ENCODE measurements at regions of chr16 and their contacts with region 1.

Region 1: GRCh38 chr16:61263400-61263799 is 772.8 kb downstream of the CDH8 start:
- DNase-seq: no peak
- H3K4me3 ChIP-seq: no peak overlapping the region
- H3K4me1 ChIP-seq: no peaks in the 10 kb centered on the region
- H3K27me3 ChIP-seq: no peaks in the 10 kb centered on the region

Region 2: DNA sequence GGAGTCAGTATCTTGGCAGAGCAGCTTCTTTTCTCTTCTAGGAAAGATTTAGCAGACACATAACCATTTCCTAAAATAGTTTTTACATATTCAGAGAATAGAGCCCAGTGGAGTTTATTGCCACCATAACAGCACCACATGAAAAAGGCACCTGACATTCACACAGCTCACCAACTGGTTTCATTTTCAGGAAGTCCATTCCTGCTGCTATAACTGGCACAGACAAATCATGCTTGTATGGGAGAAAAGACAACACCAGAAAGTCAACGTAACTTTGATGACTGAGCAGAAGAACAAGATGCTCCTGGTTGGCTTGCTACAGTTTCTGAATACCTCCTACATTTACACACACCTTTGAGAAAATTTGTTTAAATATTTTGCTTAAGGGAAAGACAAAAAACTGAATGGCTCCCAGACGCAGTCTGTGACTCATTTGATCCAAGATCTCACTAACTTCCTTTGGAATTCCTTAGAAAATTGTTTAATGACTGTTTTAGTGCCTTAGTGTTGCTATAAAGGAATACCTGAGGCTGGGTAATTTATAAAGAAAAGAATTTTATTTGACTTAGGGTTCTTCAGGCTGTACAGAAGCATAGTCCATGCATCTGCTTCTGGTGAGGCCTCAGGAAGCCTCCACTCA is 607.8 kb before region 1 on chr16:
- in situ Hi-C with region 1: no loop called
- DNase-seq: no peak
- H3K4me3 ChIP-seq: no peak overlapping the region
- H3K4me1 ChIP-seq: no peaks in the 10 kb centered on the region
- H3K27me3 ChIP-seq: no peaks in the 10 kb centered on the region

Region 3: GRCh38 chr16:61098505-61098904 is 164.9 kb before region 1 on chr16:
- in situ Hi-C with region 1: no loop called
- DNase-seq: no peak
- H3K4me3 ChIP-seq: no peak overlapping the region
- H3K4me1 ChIP-seq: no peaks in the 10 kb centered on the region
- H3K27me3 ChIP-seq: no peaks in the 10 kb centered on the region

Region 4: DNA sequence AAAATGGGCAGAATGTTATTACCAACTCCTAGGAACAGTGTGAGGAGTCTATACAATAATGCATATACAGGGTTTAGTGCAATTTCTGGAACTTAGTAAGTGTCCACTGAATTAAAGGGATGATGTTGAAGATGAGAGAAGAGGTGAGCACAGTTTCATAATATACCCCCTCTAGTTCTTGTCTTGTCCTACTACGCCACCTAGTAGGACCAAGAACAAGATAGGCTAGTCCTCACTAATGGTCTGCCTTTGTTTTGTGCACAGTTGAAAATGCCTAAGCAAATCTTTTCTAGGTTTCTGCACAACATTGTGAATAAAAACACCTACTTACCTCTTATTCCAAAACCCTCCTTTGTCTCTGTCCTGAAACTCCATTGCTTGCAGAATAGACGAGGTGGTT is 102.6 kb after region 1 on chr16:
- in situ Hi-C with region 1: loop called (anchors 25 kb)
- DNase-seq: no peak
- H3K4me3 ChIP-seq: no peak overlapping the region
- H3K4me1 ChIP-seq: no peaks in the 10 kb centered on the region
- H3K27me3 ChIP-seq: no peaks in the 10 kb centered on the region